ENCODE measurements at regions of chr18 and their contacts with region 1.

Region 1: DNA sequence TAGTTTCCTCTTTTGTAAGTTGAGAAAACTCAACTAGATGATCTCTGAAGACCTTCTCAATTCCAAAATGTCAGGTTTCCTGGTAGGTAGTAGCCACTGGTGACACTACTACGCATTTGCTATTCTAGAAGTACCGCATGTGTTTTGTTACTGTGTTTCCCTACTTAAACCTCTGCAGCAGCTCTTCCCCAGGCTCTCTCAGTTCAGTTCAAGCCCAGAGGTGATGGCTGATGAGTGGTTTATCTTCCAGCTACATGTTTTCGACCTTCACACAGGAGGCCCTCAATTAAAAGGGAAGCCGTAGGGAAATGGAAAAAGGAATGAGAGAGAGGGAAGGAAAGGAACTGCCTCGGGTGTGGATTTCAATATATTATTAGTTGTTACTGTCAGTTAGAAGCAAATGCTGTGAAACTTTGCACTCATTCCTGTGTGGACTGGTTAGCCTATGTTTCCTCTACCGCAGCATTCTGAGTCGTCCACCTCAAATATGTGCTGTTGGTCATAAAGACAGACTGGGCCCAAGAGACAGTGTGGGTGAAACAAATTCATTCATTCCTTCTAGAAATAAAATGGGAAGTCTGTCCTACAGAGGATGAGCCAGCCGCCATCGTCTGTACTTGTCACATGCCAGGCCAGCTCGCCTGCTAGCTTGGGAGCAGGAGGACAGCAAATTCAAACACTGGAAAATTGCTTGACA is 455.2 kb upstream of the RAB12 start:
- DNase-seq: no peak
- ATAC-seq: no peak
- H3K4me3 ChIP-seq: no peak overlapping the region
- H3K27ac ChIP-seq: no peak overlapping the region
- H3K4me1 ChIP-seq: no peaks in the 10 kb centered on the region
- H3K27me3 ChIP-seq: no peaks in the 10 kb centered on the region
- CTCF ChIP-seq: no peak
- EP300 ChIP-seq: no peak
- POLR2A ChIP-seq: no peak
- RAD21 ChIP-seq: no peak

Region 2: GRCh38 chr18:7755753-7756475 is 398.1 kb before region 1 on chr18:
- CTCF ChIA-PET with region 1: no interaction called
- POLR2A ChIA-PET with region 1: no interaction called
- in situ Hi-C with region 1: no loop called
- intact Hi-C with region 1: no loop called
- DNase-seq: no peak
- ATAC-seq: no peak
- H3K4me3 ChIP-seq: no peak overlapping the region
- H3K27ac ChIP-seq: no peak overlapping the region
- H3K4me1 ChIP-seq: no peaks in the 10 kb centered on the region
- H3K27me3 ChIP-seq: no peaks in the 10 kb centered on the region
- CTCF ChIP-seq: no peak; a peak in 1 of 6 replicates
- EP300 ChIP-seq: no peak
- POLR2A ChIP-seq: no peak
- RAD21 ChIP-seq: no peak

Region 3: GRCh38 chr18:9259173-9259572 is 1105.1 kb after region 1 on chr18:
- CTCF ChIA-PET with region 1: no interaction called
- POLR2A ChIA-PET with region 1: no interaction called
- in situ Hi-C with region 1: loop called (anchors 10 kb)
- intact Hi-C with region 1: no loop called
- DNase-seq: no peak
- ATAC-seq: no peak
- H3K4me3 ChIP-seq: no peak overlapping the region
- H3K27ac ChIP-seq: no peak overlapping the region
- H3K4me1 ChIP-seq: no peaks in the 10 kb centered on the region
- H3K27me3 ChIP-seq: no peaks in the 10 kb centered on the region
- CTCF ChIP-seq: no peak
- EP300 ChIP-seq: no peak
- POLR2A ChIP-seq: no peak
- RAD21 ChIP-seq: no peak

Measured in K562 (cell line).